Mammary epithelial cell (primary cell): ENCODE measurements at regions of chr7 and their contacts with region 1.

Region 1: DNA sequence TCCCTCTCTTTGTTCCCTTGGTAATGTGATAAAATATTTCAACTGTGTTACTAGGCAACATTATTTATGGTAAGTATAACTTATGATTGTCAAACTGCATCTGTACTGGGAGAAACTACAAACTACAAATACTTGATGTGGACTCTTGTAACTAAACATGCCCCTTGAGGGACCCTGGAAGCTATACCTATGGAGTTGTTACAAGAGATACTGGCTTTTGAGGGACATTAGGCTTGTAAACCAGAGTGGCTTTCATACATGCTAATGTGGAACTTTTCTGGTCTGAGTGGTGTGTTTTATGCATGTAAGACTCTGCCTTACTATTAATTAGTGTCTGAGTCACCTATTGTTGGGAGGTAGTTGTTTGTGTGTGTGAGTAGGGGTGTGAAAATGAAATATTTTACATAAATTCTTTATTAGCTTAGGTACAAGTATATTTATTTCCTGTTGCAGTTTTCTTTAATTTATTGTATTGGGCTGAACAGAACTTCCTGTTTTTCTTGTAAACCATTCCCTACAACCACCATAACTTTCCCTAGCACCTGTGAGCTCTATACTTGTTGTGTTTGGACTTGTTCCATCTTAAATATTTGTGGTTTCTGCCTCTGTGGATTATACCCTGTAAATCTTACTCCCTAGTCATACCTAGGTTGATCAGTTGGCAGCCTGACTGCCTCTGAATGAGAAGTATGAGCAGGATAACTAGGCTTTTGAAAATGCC is 49.8 kb downstream of the STK31 start:
- DNase-seq: peak; percentile 85
- H3K4me3 ChIP-seq: no peak overlapping the region
- H3K27ac ChIP-seq: no peak overlapping the region
- H3K4me1 ChIP-seq: peaks cover 11% of the 10 kb centered on the region
- H3K27me3 ChIP-seq: peaks cover 8% of the 10 kb centered on the region
- CTCF ChIP-seq: no peak

Region 2: DNA sequence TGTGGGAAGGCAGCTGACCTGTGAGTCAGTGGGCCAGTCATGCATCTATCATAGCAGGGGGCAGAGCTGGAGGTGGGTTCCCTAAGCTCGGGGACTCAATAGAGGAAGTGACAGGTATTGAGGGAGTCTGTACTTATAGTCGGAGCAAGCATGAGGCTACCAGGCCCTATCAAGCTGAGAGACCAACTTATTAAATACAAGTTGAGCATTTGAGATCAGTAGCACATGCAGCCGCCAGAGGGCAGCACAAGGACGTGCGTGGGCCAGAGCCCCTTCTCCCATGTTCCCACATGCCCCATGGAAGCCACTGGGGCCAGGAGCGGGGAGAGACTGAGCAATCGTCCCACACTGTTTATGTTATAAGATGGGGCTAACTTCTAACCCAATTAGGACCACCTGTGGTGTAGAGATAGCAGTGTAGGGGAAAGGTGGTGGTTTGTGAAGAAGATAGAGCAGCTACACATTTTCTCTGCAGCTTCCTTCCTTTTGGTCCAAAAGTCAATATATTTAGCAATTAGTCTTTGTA is 62.9 kb before region 1 on chr7:
- CTCF ChIA-PET with region 1: no interaction called
- dilution Hi-C with region 1: no loop called
- in situ Hi-C with region 1: no loop called
- intact Hi-C with region 1: no loop called
- DNase-seq: peak; percentile 29
- H3K4me3 ChIP-seq: no peak overlapping the region
- H3K27ac ChIP-seq: no peak overlapping the region
- H3K4me1 ChIP-seq: peaks cover 8% of the 10 kb centered on the region
- H3K27me3 ChIP-seq: no peaks in the 10 kb centered on the region
- CTCF ChIP-seq: peak; percentile 70 to 82

Region 3: DNA sequence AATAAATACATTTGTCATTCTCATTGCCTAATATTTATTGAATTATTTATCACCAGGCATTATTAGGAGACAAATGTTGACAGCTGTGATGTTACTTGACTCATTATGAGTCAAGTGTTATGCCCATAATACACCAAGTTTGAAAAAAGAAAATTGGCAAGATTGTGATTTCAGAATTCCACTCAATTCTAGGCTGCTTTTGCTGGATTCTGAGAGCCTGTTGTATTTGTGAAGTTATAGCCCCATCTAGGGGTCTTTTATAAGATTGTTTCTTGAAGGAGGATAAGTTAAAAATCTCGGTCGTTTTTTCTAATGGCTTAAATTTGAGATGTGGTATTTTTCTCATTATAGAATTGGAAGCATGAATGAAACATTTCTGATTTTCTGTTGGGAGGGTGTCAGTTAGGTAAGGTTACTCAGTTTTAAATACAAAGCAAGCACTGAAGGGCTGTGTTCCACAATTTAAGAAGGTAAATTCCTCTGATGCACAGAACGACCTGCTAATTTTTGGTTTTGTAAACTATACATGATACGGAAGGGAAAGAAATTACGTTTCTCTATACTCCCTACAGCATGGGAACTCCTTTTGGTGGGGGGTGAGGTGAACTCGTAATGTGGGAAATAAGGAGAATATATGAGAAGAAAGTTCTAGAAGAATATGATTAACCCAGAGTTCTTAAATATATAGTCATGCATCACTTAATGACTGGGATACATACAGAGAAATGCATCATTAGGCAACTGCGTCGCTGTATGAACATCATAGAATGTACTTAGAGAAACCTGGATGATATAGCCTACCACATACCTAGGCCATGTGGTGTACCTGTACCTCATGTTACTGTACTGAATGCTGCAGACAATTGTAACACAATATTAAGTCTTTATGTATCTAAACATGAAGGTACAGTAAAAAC is 47.2 kb before region 1 on chr7:
- CTCF ChIA-PET with region 1: no interaction called
- dilution Hi-C with region 1: no loop called
- in situ Hi-C with region 1: no loop called
- intact Hi-C with region 1: loop called (anchors 5 kb)
- DNase-seq: peak; percentile 60
- H3K4me3 ChIP-seq: no peak overlapping the region
- H3K27ac ChIP-seq: no peak overlapping the region
- H3K4me1 ChIP-seq: peaks cover 20% of the 10 kb centered on the region
- H3K27me3 ChIP-seq: no peaks in the 10 kb centered on the region
- CTCF ChIP-seq: peak; percentile 35 to 46